AG04450 (cell line): ENCODE measurements at regions of chr3 and their contacts with region 1.

Region 1: GRCh38 chr3:28667646-28668621 is 319.3 kb upstream of the AZI2 start:
- DNase-seq: peak; percentile 36
- H3K4me3 ChIP-seq: no peak overlapping the region
- H3K27ac ChIP-seq: no peak overlapping the region
- H3K27me3 ChIP-seq: peaks cover 2% of the 10 kb centered on the region
- CTCF ChIP-seq: peak; percentile 82

Region 2: GRCh38 chr3:28651159-28651558 is 16.8 kb before region 1 on chr3:
- CTCF ChIA-PET with region 1: interaction called, 35 read pairs
- POLR2A ChIA-PET with region 1: no interaction called
- DNase-seq: no peak
- H3K4me3 ChIP-seq: no peak overlapping the region
- H3K27ac ChIP-seq: no peak overlapping the region
- H3K27me3 ChIP-seq: no peaks in the 10 kb centered on the region
- CTCF ChIP-seq: no peak

Region 3: DNA sequence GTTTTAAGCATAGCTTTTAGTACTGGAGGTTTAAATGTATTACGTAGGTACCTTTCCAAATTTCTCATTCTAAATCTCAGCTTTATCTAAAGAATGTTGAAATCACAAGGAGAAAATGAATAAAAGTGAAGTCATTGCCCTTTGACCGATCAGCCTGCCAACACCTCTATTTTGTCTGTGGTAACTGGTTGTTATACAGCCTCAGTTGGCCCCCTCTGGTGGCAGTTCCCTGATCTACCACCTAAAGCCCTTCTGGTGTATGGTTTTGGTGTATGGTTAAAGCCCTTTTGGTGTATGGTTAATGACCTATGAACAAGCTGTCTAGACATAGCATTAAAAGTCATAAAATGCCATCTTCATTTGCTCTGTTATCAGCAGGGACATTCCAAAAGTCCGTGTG is 58.9 kb after region 1 on chr3:
- CTCF ChIA-PET with region 1: interaction called, 11 read pairs
- POLR2A ChIA-PET with region 1: no interaction called
- DNase-seq: no peak
- H3K4me3 ChIP-seq: no peak overlapping the region
- H3K27ac ChIP-seq: no peak overlapping the region
- H3K27me3 ChIP-seq: no peaks in the 10 kb centered on the region
- CTCF ChIP-seq: peak; percentile 53

Region 4: DNA sequence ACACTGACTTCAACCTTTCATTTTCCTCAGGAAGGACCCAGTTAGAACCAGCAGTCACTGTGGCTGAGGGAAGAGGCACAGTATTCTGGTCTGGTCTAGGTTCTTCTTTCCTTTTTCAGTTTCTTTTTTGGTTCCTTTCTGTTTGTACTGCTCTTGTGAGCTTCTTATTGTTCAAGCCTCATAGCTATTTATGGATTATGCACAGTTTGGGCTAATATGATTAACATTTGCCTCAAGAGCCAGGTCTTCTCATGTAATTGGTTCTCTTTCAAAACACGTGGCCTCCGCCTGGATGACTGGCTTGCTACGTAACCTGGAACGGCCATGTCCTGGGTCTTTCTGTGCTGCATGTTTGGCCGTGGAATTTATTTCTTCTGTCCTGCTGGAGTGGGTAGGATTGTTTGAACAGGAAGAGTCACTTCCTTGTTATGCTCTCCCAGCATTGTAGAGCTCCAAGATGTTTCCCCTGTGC is 656.3 kb after region 1 on chr3:
- CTCF ChIA-PET with region 1: no interaction called
- POLR2A ChIA-PET with region 1: no interaction called
- DNase-seq: no peak
- H3K4me3 ChIP-seq: no peak overlapping the region
- H3K27ac ChIP-seq: peak overlapping the region; percentile 11
- H3K27me3 ChIP-seq: no peaks in the 10 kb centered on the region
- CTCF ChIP-seq: no peak